Heart right ventricle (tissue), 16 donors: ENCODE measurements at regions of chr20 and their contacts with region 1.

Region 1: GRCh38 chr20:22846863-22847262 is 188.2 kb upstream of the SSTR4 start:
- DNase-seq: no peak
- ATAC-seq: no peak
- H3K4me3 ChIP-seq: no peak overlapping the region
- H3K27ac ChIP-seq: no peak overlapping the region
- H3K4me1 ChIP-seq: no peaks in the 10 kb centered on the region
- H3K27me3 ChIP-seq: peaks cover 0 to 5% (median 0%) of the 10 kb centered on the region in 7 donors
- CTCF ChIP-seq: no peak

Region 2: GRCh38 chr20:22744341-22745193 is 102.3 kb before region 1 on chr20:
- intact Hi-C with region 1: loop called in 1 of 10 experiments (anchors 5 kb)
- DNase-seq: no peak
- ATAC-seq: no peak
- H3K4me3 ChIP-seq: no peak overlapping the region
- H3K27ac ChIP-seq: no peak overlapping the region
- H3K4me1 ChIP-seq: no peaks in the 10 kb centered on the region
- H3K27me3 ChIP-seq: no peaks in the 10 kb centered on the region
- CTCF ChIP-seq: no peak

Region 3: DNA sequence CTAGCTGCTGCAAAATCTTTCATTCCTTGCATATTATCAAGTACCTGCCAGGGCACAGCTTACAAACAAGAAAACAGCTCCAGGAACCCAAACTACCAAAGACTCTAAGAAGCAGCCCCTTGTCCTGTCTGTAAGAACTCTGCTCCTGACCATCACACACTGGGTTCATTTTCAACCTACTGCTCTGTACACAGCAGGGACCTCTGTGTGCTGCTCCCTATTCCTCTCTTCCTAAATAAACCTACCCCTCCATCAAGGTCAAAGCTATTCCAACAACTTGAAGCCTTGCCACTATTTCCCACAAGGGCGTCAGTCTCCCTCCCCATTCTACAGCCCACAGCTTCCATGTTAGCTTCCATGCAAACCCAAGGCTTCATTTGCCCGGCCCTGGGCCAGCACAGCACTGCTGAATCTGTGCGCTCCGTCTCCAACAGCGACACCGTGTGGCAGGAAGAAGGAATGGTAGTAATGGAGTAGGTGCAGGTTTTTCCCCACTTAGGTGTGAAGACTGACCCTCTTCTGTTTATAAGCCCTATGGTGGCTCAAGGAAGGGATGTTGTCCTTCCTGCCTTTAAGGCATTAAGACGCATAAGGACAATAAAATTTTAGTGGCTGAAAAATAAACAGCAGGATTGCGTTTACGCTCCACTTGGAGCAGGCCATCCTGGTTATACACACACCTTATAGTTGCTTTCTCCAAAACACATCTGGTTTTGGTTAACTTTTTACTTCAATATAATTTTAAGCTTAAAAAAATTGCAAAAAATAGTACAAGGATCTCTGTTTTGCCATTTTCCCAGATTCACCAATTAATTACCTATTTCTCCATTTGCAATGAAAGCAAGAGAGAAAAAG is 388.5 kb after region 1 on chr20:
- intact Hi-C with region 1: loop called in 3 of 10 experiments (anchors 10 kb)
- DNase-seq: peak; percentile 73 to 77
- ATAC-seq: peak; percentile 88 to 95 (median 92)
- H3K4me3 ChIP-seq: no peak overlapping the region
- H3K27ac ChIP-seq: no peak overlapping the region
- H3K4me1 ChIP-seq: peaks cover 0 to 11% (median 0%) of the 10 kb centered on the region in 9 donors
- H3K27me3 ChIP-seq: no peaks in the 10 kb centered on the region
- CTCF ChIP-seq: peak; percentile 81 to 92 (median 89)